ENCODE measurements at regions of chr9 and their contacts with region 1.

Region 1: DNA sequence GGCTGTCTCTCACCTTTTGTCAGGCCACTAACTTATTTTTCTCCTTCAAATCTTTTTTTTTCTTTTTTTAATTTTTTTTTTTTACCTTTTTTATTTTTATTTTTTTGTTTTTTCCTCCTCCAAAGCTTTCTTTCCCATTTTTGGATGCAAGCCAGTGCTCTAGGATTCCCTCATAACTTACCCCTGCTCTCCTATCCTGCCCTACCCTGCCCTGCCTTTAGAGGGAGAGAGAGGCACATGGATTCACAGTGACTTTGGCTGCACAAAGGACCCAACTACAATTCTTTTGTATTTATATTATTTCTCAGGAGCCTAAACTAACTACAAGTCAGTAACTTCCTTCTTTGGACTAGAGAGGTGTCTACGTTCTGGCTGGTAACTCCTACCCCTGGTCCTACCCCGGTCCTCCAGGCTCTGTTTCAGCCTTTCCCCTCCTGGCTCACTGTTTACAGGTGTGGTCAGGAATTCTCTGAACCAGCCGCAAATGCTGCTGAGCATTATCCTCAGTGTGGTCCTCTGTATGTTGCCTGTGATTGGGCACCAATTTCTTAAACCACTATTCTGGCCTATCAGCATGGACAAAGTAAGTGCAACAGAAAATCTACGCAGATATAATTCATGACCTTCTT is 8.4 kb upstream of the RUSC2 start:
- DNase-seq: peak in 3 of 9 donors; percentile 14 to 38 (median 19)
- ATAC-seq: peak; percentile 68
- H3K4me3 ChIP-seq: no peak overlapping the region
- H3K4me3 Mint-ChIP-seq: no peak overlapping the region
- H3K27ac ChIP-seq: no peak overlapping the region
- H3K27ac Mint-ChIP-seq: no peak overlapping the region
- H3K4me1 ChIP-seq: no peaks in the 10 kb centered on the region
- H3K4me1 Mint-ChIP-seq: no peaks in the 10 kb centered on the region
- H3K27me3 ChIP-seq: peaks cover 0 to 4% of the 10 kb centered on the region in 2 donors
- H3K27me3 Mint-ChIP-seq: peaks cover 0 to 15% (median 8%) of the 10 kb centered on the region in 5 donors

Region 2: DNA sequence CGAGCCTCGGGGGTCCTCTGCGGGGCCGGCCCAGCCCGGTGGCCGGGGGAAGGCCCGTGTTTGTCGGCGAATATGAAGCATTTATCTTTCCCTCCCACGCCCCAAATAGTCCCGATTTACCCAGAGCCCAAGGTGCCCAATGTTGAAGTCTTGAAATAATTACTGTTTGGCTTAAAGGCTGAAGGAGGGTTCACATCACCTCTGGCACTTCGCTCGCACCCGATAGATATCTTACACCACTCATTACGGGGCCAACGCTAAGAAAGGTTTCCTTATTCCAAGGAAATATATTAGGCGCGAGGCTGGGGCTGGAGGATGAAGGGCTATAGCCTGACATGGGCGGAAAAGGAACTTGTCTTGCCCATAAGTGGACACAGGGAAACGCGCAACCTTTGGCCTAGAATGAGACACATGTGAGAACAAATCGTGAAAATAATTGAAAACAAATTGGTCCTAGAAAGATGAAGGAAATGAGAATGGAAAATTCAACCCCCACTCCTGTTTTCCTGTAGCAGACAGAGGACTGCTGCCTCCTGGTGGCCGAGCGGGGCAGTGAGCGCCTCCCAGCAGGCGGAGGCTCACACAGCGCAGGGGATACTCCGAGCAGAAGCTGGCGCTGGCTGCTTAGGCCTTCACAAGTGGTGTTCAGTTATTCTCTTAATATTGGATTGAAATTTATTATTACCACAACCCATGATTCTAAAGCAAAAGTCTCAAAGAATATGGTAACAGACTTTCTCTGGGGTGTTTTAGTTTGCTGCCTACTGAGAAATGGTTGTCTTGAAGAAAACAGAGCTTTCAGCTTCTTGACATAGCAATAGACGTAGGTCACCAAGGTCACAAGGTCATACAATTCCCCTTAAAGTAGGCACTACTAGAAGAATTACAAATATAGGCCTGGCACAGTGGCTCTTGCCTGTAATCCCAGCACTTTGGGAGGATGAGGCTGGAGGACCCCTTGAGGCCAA is 779.4 kb before region 1 on chr9:
- CTCF ChIA-PET with region 1: no interaction called
- POLR2A ChIA-PET with region 1: no interaction called
- intact Hi-C with region 1: loop called in 1 of 2 experiments (anchors 5 kb)
- DNase-seq: peak; percentile 59 to 83 (median 73)
- ATAC-seq: peak; percentile 90
- H3K4me3 ChIP-seq: peak overlapping the region; percentile 61
- H3K4me3 Mint-ChIP-seq: peak overlapping the region; percentile 80 to 91 (median 84)
- H3K27ac ChIP-seq: no peak overlapping the region
- H3K27ac Mint-ChIP-seq: peak overlapping the region in 7 of 9 donors; percentile 1 to 84 (median 20)
- H3K4me1 ChIP-seq: no peaks in the 10 kb centered on the region
- H3K4me1 Mint-ChIP-seq: peaks cover 5 to 9% (median 6%) of the 10 kb centered on the region in 7 donors
- H3K27me3 ChIP-seq: no peaks in the 10 kb centered on the region
- H3K27me3 Mint-ChIP-seq: peaks cover 0 to 17% (median 0%) of the 10 kb centered on the region in 5 donors

Region 3: DNA sequence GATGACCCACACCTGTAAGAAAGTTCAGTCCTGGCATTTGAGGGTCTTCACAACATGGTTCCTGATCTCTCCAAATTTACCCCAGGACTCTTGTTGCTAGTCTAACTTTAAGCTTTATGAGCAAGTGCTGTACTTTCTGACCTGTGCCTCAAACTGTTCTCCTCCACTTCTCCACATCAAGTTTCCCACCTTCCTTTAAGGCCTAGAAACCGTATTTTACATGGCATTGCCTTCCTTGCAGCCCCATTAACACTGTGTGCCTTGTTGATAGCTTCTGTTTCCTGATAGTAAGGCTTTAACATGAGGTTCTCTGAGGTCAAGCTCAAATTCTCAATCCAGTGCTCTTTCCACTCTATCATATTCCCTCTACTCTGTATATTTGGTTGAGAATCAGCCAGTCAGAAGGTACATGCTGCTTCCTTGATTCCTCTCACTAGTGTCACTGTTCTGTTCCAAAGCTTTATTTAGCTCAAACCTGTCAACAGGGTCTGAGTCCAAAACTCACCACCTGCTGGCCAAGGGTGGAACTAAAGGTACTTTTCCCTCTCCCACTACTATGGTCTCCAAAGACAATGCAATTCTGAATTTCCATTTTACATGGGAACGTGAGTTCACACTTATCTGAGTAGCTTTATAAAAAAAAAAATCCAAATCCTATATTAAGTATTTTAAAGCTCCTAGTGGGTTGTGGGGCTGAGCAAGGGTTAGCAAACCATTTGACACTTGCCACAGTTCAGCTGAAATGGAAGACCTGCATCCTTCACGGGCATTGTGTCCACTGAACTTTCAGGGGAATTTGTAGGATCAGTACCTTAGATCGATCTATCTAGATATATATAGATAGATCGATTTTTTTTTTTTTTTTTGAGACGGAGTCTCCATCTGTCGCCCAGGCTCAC is 430.1 kb before region 1 on chr9:
- CTCF ChIA-PET with region 1: no interaction called
- POLR2A ChIA-PET with region 1: no interaction called
- intact Hi-C with region 1: loop called in 1 of 2 experiments (anchors 1 kb)
- DNase-seq: peak in 8 of 9 donors; percentile 23 to 53 (median 46)
- ATAC-seq: peak; percentile 79
- H3K4me3 ChIP-seq: no peak overlapping the region
- H3K4me3 Mint-ChIP-seq: peak overlapping the region in 1 of 10 donors; percentile 15
- H3K27ac ChIP-seq: no peak overlapping the region
- H3K27ac Mint-ChIP-seq: peak overlapping the region in 3 of 9 donors; percentile 0 to 22 (median 1)
- H3K4me1 ChIP-seq: no peaks in the 10 kb centered on the region
- H3K4me1 Mint-ChIP-seq: peaks cover 0 to 9% (median 4%) of the 10 kb centered on the region in 7 donors
- H3K27me3 ChIP-seq: no peaks in the 10 kb centered on the region
- H3K27me3 Mint-ChIP-seq: no peaks in the 10 kb centered on the region

Region 4: GRCh38 chr9:35533398-35533797 is 51.9 kb after region 1 on chr9:
- CTCF ChIA-PET with region 1: no interaction called
- POLR2A ChIA-PET with region 1: no interaction called
- intact Hi-C with region 1: no loop called
- DNase-seq: no peak
- ATAC-seq: no peak
- H3K4me3 ChIP-seq: no peak overlapping the region
- H3K4me3 Mint-ChIP-seq: no peak overlapping the region
- H3K27ac ChIP-seq: no peak overlapping the region
- H3K27ac Mint-ChIP-seq: no peak overlapping the region
- H3K4me1 ChIP-seq: no peaks in the 10 kb centered on the region
- H3K4me1 Mint-ChIP-seq: peaks cover 0 to 6% (median 0%) of the 10 kb centered on the region in 7 donors
- H3K27me3 ChIP-seq: no peaks in the 10 kb centered on the region
- H3K27me3 Mint-ChIP-seq: peaks cover 0 to 5% (median 0%) of the 10 kb centered on the region in 5 donors

Region 5: DNA sequence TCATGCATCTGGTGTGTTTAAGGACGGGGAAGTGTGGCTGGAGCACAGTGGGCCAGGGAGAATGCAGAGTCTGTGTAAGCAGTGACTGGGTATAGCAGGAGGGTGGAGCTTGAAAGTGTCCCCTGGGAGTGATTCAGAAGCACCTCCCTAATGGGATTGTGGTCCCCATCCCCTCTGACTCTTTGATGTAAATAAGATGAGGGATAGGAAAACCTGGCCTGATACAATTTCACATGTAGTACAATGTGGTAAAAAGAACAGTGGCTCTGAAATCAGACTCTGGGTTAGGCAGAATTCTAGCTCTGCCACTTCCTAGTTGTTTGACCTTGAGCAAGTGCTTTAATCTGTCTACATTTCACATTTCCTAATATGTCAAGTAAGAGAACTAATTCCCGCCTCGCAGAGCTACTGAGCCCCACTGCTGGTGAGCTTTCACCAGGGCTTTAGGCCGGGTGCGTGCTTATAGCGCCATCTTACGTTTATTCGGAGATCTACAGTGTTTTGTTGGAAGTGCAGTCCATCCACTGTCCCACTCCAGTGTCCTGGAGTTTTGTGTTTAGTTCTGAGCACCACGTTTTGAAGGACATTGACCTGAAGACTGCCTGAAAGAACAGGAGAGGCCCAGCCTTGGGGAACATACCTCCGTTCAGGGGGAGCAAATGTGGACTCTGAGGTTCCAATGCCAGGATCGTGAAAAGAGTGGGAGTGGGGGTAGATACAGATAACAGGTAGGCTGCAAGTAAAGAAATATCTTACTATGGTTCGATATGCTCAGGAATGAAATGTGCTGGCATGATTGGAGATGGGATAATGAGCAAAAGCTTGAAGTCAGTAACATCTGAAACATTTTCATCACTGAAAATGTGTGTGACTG is 72.4 kb after region 1 on chr9:
- CTCF ChIA-PET with region 1: interaction called, 7 read pairs
- POLR2A ChIA-PET with region 1: no interaction called
- intact Hi-C with region 1: loop called (anchors 1 kb)
- DNase-seq: peak in 7 of 9 donors; percentile 17 to 51 (median 41)
- ATAC-seq: peak; percentile 89
- H3K4me3 ChIP-seq: no peak overlapping the region
- H3K4me3 Mint-ChIP-seq: no peak overlapping the region
- H3K27ac ChIP-seq: no peak overlapping the region
- H3K27ac Mint-ChIP-seq: no peak overlapping the region
- H3K4me1 ChIP-seq: no peaks in the 10 kb centered on the region
- H3K4me1 Mint-ChIP-seq: peaks cover 0 to 3% (median 0%) of the 10 kb centered on the region in 7 donors
- H3K27me3 ChIP-seq: no peaks in the 10 kb centered on the region
- H3K27me3 Mint-ChIP-seq: peaks cover 0 to 2% (median 0%) of the 10 kb centered on the region in 5 donors